Ovary (tissue), 10 donors: ENCODE measurements at regions of chr4 and their contacts with region 1.

Region 1: GRCh38 chr4:8303485-8304301 is 34.1 kb downstream of the HTRA3 start:
- DNase-seq: peak in 4 of 5 donors; percentile 9 to 28 (median 22)
- H3K4me3 ChIP-seq: no peak overlapping the region
- H3K27ac ChIP-seq: no peak overlapping the region
- H3K4me1 ChIP-seq: peaks cover 17% of the 10 kb centered on the region
- H3K27me3 ChIP-seq: no peaks in the 10 kb centered on the region
- CTCF ChIP-seq: no peak
- EP300 ChIP-seq: no peak
- POLR2A ChIP-seq: no peak

Region 2: DNA sequence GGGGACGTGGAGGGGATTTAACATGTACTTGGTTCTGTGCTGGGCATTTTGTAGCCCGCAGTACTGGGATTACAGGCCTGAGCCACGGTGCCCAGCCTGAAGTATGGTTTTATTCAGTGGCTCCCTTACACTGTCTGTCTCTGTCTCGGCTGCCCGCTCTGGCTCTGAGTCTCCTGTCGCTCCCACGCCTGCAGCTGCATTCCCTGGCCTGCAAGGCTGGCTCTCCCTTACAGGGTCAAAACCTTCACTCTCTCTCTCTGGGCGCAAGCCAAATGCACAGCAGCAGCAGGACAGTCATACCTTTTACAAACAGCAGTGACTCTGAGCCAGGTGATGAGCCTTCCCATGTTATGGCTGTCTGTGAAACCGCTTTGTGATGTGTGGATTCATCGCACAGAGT is 38.0 kb after region 1 on chr4:
- intact Hi-C with region 1: no loop called
- DNase-seq: peak; percentile 68 to 81 (median 71)
- H3K4me3 ChIP-seq: no peak overlapping the region
- H3K27ac ChIP-seq: peak overlapping the region; percentile 50 to 90
- H3K4me1 ChIP-seq: peaks cover 31% of the 10 kb centered on the region
- H3K27me3 ChIP-seq: no peaks in the 10 kb centered on the region
- CTCF ChIP-seq: no peak
- EP300 ChIP-seq: no peak
- POLR2A ChIP-seq: no peak

Region 3: GRCh38 chr4:8351931-8352367 is 48.3 kb after region 1 on chr4:
- intact Hi-C with region 1: loop called in 1 of 4 experiments (anchors 10 kb)
- DNase-seq: peak; percentile 63 to 84 (median 73)
- H3K4me3 ChIP-seq: no peak overlapping the region
- H3K27ac ChIP-seq: peak overlapping the region; percentile 37 to 79
- H3K4me1 ChIP-seq: peaks cover 34% of the 10 kb centered on the region
- H3K27me3 ChIP-seq: no peaks in the 10 kb centered on the region
- CTCF ChIP-seq: no peak
- EP300 ChIP-seq: no peak
- POLR2A ChIP-seq: no peak

Region 4: GRCh38 chr4:8427743-8428292 is 124.1 kb after region 1 on chr4:
- intact Hi-C with region 1: loop called in 1 of 4 experiments (anchors 1 kb)
- DNase-seq: no peak
- H3K4me3 ChIP-seq: peak overlapping the region; percentile 91
- H3K27ac ChIP-seq: peak overlapping the region in 1 of 2 donors; percentile 22
- H3K4me1 ChIP-seq: peaks cover 13% of the 10 kb centered on the region
- H3K27me3 ChIP-seq: no peaks in the 10 kb centered on the region
- CTCF ChIP-seq: no peak
- EP300 ChIP-seq: no peak
- POLR2A ChIP-seq: no peak

Region 5: DNA sequence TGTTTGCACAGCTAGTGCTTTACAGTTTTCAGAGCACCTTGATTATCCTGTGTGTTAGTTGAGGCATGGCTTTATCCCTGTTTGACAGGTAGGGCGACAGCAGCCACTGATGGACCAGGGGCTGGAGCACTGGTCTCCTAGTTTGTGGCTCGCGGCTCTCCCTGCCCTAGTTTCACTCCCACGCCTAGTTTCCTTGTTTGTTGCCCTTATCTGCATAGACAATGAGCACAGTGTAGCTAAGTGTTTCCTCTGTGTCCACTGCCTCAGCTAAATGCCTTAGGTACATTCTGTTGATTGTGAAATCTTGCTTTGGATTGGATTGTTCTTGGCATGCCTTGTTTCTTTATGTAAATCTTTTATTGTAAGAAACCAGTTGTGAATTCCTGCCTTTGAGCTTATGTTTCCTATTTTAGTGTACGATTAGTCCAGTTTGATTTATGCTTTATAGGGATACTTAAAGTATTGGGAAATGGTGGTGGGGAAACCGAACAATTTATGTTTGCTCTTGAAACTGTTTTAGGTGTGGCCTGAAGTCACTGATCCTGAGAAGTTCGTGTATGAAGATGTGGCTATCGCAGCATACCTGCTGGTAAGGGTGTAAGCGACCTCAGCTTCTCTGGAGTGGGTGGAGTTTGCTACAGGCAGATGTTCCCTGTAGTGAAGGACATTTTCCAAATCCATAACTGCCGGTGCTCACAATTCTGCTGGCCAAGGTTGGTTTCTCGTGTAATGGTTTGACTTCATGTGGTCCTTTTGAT is 147.9 kb after region 1 on chr4:
- intact Hi-C with region 1: no loop called
- DNase-seq: no peak
- H3K4me3 ChIP-seq: no peak overlapping the region
- H3K27ac ChIP-seq: no peak overlapping the region
- H3K4me1 ChIP-seq: no peaks in the 10 kb centered on the region
- H3K27me3 ChIP-seq: no peaks in the 10 kb centered on the region
- CTCF ChIP-seq: no peak
- EP300 ChIP-seq: no peak
- POLR2A ChIP-seq: no peak